ENCODE measurements at regions of chr10 and their contacts with region 1.

Region 1: DNA sequence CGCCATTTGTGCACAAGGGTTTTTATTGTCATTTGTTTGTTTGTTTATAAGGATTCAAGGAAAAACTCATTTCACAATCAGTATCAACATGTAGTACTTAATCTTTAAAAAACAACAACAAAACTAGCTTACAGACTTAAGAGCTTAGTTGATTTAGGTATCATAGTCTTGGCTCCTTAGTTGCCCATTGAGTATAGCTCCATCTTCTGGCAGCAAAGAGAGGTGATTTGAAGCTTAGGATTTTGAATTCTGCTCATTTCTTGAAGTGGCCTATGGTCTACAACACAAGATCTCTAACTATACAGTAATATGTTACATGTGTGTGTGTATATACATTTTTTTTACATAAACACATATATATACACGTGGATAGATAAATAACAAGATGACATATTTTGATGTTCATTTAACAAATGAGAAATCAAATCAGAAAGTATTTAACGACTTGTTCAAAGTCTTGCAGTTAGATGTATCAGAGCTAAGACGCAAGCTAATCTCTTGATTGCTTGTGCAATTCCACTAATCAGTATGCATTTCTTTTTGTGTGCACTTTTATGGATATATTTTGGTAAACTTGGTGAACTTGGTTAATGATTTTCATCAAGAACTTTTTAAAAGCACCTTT is 307.3 kb downstream of the CAMK1D start:
- DNase-seq: peak; percentile 48
- ATAC-seq: peak; percentile 77
- H3K4me3 ChIP-seq: no peak overlapping the region
- H3K27ac ChIP-seq: no peak overlapping the region
- H3K4me1 ChIP-seq: no peaks in the 10 kb centered on the region
- H3K27me3 ChIP-seq: no peaks in the 10 kb centered on the region
- CTCF ChIP-seq: peak; percentile 70 to 82 (median 80)
- POLR2A ChIP-seq: no peak
- RAD21 ChIP-seq: peak; percentile 83

Region 2: DNA sequence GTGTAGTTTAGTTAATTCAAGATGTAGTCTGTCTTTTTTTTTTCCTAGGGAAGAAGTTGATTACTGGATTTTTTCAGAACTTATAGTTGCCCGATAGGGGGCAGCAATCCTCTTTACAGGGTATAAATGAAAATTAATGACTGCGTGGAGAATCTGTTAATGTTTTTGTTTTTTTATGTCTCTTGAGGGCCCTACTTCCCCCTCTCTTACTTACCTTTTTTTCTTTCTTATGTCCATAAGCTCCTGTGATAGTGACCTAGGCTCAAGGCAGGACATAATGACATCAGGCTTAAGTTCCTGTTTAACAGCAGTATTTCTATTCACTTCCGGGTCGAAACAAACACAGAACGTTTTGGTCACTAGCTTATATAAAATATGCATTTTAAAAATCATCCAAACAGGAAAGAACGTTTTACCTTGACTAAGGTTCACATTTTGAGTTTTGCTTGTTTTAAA is 441.8 kb before region 1 on chr10:
- CTCF ChIA-PET with region 1: interaction called, 16 read pairs
- POLR2A ChIA-PET with region 1: no interaction called
- RAD21 ChIA-PET with region 1: no interaction called
- intact Hi-C with region 1: no loop called
- DNase-seq: no peak
- ATAC-seq: no peak
- H3K4me3 ChIP-seq: no peak overlapping the region
- H3K27ac ChIP-seq: no peak overlapping the region
- H3K4me1 ChIP-seq: no peaks in the 10 kb centered on the region; a peak in 1 of 4 replicates
- H3K27me3 ChIP-seq: no peaks in the 10 kb centered on the region
- CTCF ChIP-seq: peak; percentile 48 to 83 (median 64); a peak in 5 of 6 replicates
- POLR2A ChIP-seq: no peak
- RAD21 ChIP-seq: peak; percentile 54

Region 3: GRCh38 chr10:12264204-12264940 is 392.3 kb before region 1 on chr10:
- CTCF ChIA-PET with region 1: interaction called, 50 read pairs
- POLR2A ChIA-PET with region 1: no interaction called
- RAD21 ChIA-PET with region 1: interaction called, 11 to 12 read pairs
- intact Hi-C with region 1: loop called (anchors 1 kb)
- DNase-seq: peak; percentile 60
- ATAC-seq: peak; percentile 97
- H3K4me3 ChIP-seq: peak overlapping the region in 1 of 2 experiments; percentile 33; a peak in 2 of 4 replicates
- H3K27ac ChIP-seq: no peak overlapping the region; the same call in 1 of the 2 replicates
- H3K4me1 ChIP-seq: peaks cover 8 to 17% of the 10 kb centered on the region in 2 experiments; a peak in 3 of 4 replicates
- H3K27me3 ChIP-seq: no peaks in the 10 kb centered on the region
- CTCF ChIP-seq: peak; percentile 69 to 87 (median 69)
- POLR2A ChIP-seq: no peak
- RAD21 ChIP-seq: peak; percentile 98

Region 4: GRCh38 chr10:12638103-12638502 is 18.5 kb before region 1 on chr10:
- CTCF ChIA-PET with region 1: interaction called, 15 read pairs
- POLR2A ChIA-PET with region 1: no interaction called
- RAD21 ChIA-PET with region 1: no interaction called
- intact Hi-C with region 1: no loop called
- DNase-seq: no peak
- ATAC-seq: no peak
- H3K4me3 ChIP-seq: no peak overlapping the region
- H3K27ac ChIP-seq: no peak overlapping the region
- H3K4me1 ChIP-seq: no peaks in the 10 kb centered on the region
- H3K27me3 ChIP-seq: no peaks in the 10 kb centered on the region
- CTCF ChIP-seq: no peak
- POLR2A ChIP-seq: no peak
- RAD21 ChIP-seq: no peak

Region 5: GRCh38 chr10:12645449-12645848 is 11.2 kb before region 1 on chr10:
- CTCF ChIA-PET with region 1: interaction called, 15 read pairs
- POLR2A ChIA-PET with region 1: no interaction called
- RAD21 ChIA-PET with region 1: no interaction called
- intact Hi-C with region 1: no loop called
- DNase-seq: no peak
- ATAC-seq: no peak
- H3K4me3 ChIP-seq: no peak overlapping the region
- H3K27ac ChIP-seq: no peak overlapping the region
- H3K4me1 ChIP-seq: no peaks in the 10 kb centered on the region
- H3K27me3 ChIP-seq: no peaks in the 10 kb centered on the region
- CTCF ChIP-seq: no peak
- POLR2A ChIP-seq: no peak
- RAD21 ChIP-seq: no peak

Region 6: DNA sequence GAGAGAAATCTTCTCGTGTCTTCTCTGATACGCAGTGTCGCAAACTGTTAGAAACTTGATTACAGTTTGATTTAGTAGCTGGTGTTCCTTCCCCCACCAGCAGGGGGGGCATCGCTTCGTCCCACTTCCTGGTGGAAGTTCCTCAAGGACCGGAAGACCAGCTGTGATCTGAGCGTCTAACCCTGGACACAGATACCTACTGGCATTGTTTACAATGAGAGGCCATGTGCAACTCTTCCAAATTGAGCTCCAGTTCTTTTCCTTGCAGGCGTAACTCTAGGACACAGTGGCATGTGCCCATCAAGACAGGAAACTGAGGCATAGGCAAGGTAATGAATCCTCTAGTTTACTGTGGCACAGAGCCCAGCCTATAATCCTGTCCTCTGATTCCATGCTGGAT is 125.9 kb after region 1 on chr10:
- CTCF ChIA-PET with region 1: no interaction called
- POLR2A ChIA-PET with region 1: no interaction called
- RAD21 ChIA-PET with region 1: no interaction called
- intact Hi-C with region 1: no loop called
- DNase-seq: peak; percentile 42
- ATAC-seq: peak; percentile 91
- H3K4me3 ChIP-seq: peak overlapping the region; percentile 20 to 27; a peak in 2 of 4 replicates
- H3K27ac ChIP-seq: no peak overlapping the region
- H3K4me1 ChIP-seq: peaks cover 2 to 9% of the 10 kb centered on the region in 2 experiments; a peak in 3 of 4 replicates
- H3K27me3 ChIP-seq: no peaks in the 10 kb centered on the region
- CTCF ChIP-seq: peak; percentile 50 to 94 (median 92); a peak in 5 of 6 replicates
- POLR2A ChIP-seq: no peak
- RAD21 ChIP-seq: peak; percentile 66

Measured in HCT116 (cell line).